Aorta (tissue), 5 donors: ENCODE measurements at regions of chr15 and their contacts with region 1.

Region 1: DNA sequence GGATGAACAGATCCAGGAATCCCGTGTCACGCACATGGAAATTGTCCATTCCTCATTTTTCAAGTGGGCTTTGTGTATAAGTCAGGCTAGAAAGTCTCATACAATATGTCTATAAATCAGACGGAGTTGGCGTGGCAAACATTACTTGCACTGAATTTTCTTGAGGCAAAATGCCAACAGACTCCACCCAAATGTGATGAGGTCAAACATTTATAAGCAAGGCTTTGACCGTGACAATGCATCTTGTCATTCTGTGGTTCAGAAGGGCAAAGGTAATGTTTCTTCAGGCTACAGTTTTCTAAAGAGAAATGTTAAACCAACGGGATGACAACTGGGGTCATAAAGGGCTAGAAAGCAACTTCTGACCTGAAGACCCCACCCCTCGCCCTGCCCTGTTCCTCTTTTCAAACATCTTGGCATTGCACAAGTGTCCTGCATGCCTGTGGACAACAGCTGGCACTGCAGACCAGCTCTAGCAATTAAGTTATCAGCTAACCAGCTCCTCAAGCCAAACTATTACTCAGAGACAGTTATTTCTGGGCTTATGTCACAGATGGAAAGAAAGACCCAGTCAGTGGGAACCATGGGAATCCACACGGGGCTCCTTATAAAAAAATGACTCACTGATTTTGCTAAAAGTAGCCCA is 36.5 kb upstream of the SPTBN5 start:
- DNase-seq: peak in 1 of 2 donors; percentile 82
- ATAC-seq: peak; percentile 86
- H3K4me3 ChIP-seq: no peak overlapping the region
- H3K27ac ChIP-seq: peak overlapping the region in 1 of 2 donors; percentile 70
- H3K4me1 ChIP-seq: peaks cover 4 to 5% of the 10 kb centered on the region in 2 donors
- H3K27me3 ChIP-seq: no peaks in the 10 kb centered on the region

Region 2: DNA sequence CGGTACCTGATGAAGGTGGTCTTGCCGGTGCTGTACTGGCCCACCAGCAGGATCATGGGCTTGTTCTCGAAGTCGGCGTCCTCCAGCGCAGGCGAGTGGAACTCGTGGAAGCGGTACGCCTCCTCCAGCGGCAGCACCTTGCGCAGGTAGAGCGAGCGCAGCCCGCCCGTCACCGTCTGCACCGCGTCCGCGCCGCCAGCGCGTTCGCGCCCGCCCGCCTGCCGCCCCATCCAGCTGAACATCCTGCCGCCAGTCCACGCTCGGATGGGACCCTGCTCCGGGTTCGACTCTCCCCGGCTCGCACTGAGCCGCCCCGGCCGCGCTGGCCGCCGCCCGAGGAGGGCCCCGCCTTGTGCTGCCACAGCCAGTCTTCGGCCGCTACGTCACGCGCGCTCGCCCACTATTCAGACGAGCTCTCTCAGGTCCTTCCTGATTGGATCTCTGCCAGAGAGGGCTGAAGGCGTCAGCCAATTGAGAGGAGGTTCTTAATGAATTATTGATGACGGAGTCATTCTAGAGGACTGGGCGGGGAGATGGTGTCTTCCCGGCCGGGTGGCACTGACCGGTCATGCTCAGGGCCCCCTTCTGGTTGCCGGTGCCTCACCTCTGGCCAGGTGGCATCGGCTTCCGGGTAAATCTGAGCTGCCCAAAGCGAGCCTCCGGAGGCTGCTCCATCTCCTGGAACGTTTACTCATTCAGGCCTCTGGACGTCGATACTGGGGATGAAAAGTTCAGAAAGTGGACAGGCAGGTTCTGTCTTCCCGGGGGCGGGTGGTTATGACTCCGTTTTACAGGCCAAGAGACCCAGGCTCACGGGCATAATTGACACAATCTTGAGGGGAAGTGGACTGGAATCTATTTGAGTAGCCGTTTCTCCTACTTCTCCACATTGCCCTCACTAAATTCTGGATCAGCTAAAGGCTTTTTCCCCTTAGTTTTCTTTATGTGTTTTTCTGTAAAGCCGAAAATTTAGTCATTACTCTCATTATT is 42.2 kb after region 1 on chr15 and contains the start of gene EHD4:
- intact Hi-C with region 1: loop called (anchors 5 kb)
- DNase-seq: peak; percentile 99 to 100
- ATAC-seq: peak; percentile 97
- H3K4me3 ChIP-seq: peak within 1 kb of the TSS; percentile 57 to 89
- H3K27ac ChIP-seq: peak within 1 kb of the TSS; percentile 68 to 69
- H3K4me1 ChIP-seq: peaks cover 0 to 7% of the 10 kb centered on the region in 2 donors
- H3K27me3 ChIP-seq: no peaks in the 10 kb centered on the region
- total RNA-seq, gene EHD4: 47.3 to 56.6 TPM

Region 3: DNA sequence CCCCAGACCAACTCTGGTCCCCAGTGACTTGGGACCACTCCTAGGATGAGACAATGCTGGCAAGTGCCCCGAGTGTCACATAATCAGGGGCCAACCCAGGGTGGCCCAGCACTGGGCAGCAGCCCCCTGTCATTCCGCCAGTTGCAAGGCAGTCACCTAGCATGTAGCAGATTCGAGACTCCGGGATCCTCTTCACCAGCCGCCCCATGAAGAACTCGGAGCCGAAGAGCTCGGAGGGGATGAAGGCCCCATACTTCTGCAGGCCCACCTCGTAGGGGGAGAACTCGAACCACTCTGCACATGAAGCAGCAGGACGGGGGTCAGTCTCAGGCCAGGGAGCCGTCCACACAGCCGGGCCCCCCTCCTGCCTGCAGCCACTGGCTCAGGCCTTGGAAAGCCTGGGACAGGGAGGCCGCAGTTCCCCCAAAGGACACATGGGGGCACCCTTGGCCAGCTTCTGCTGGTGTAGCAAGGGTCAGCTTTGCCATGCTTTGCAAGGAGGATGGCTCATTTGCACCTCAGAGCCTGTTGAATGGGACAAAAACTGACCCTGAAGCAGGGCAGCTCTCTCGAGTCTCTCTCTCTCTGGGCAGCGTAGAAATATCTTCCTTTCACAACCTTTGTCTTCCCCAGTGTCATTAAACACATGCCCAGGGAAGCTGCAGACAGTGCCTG is 59.1 kb after region 1 on chr15:
- intact Hi-C with region 1: no loop called
- DNase-seq: peak; percentile 86 to 95
- ATAC-seq: peak; percentile 87
- H3K4me3 ChIP-seq: no peak overlapping the region
- H3K27ac ChIP-seq: no peak overlapping the region
- H3K4me1 ChIP-seq: peaks cover 0 to 2% of the 10 kb centered on the region in 2 donors
- H3K27me3 ChIP-seq: no peaks in the 10 kb centered on the region